ENCODE measurements at regions of chr3 and their contacts with region 1.

Region 1: GRCh38 chr3:121698901-121699300 is 38.2 kb upstream of the HCLS1 start:
- DNase-seq: no peak
- H3K4me3 ChIP-seq: no peak overlapping the region
- H3K27ac ChIP-seq: no peak overlapping the region
- H3K4me1 ChIP-seq: no peaks in the 10 kb centered on the region
- CTCF ChIP-seq: no peak

Region 2: GRCh38 chr3:119751423-119751822 is 1947.5 kb before region 1 on chr3:
- CTCF ChIA-PET with region 1: no interaction called
- POLR2A ChIA-PET with region 1: no interaction called
- intact Hi-C with region 1: no loop called
- DNase-seq: no peak
- H3K4me3 ChIP-seq: no peak overlapping the region
- H3K27ac ChIP-seq: no peak overlapping the region
- H3K4me1 ChIP-seq: no peaks in the 10 kb centered on the region
- CTCF ChIP-seq: no peak

Region 3: GRCh38 chr3:121405631-121406030 is 293.3 kb before region 1 on chr3:
- CTCF ChIA-PET with region 1: no interaction called
- POLR2A ChIA-PET with region 1: no interaction called
- intact Hi-C with region 1: no loop called
- DNase-seq: no peak
- H3K4me3 ChIP-seq: no peak overlapping the region
- H3K27ac ChIP-seq: no peak overlapping the region
- H3K4me1 ChIP-seq: no peaks in the 10 kb centered on the region
- CTCF ChIP-seq: no peak

Region 4: GRCh38 chr3:121651684-121652083 is 47.2 kb before region 1 on chr3:
- CTCF ChIA-PET with region 1: no interaction called
- POLR2A ChIA-PET with region 1: no interaction called
- intact Hi-C with region 1: no loop called
- DNase-seq: no peak
- H3K4me3 ChIP-seq: no peak overlapping the region
- H3K27ac ChIP-seq: no peak overlapping the region
- H3K4me1 ChIP-seq: peaks cover 13% of the 10 kb centered on the region
- CTCF ChIP-seq: no peak

Region 5: GRCh38 chr3:121681792-121682191 is 17.1 kb before region 1 on chr3:
- CTCF ChIA-PET with region 1: no interaction called
- POLR2A ChIA-PET with region 1: interaction called, 10 read pairs
- intact Hi-C with region 1: no loop called
- DNase-seq: no peak
- H3K4me3 ChIP-seq: no peak overlapping the region
- H3K27ac ChIP-seq: no peak overlapping the region
- H3K4me1 ChIP-seq: no peaks in the 10 kb centered on the region
- CTCF ChIP-seq: no peak

Region 6: DNA sequence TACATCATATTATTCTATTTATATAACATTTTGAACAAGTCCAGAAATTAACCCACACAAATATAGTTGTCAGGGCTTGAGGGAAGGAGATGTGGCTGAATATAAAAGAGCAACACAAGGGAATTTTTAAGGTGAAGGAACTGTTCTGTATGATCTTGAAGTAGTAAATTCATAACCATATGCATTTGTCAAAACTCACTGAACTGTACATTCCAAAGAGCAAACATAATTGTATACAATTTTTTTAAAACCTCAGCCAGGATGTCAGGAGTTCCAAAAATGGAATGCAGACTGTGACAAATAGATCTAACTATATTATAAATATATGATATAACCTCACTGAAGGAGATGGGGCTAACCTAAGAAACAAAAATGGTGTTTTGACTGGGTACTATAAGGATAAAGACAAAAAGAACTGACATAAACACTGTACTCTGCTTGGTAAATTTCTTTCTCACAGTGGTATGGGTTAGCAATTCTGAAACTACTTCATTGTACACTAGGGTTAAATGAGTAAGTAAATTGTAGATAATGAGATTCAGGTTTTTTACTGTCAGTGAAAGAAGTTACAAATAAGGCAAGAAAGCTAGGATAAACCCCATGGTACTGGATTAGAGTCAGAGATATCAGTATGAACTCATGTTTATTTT is 36.3 kb after region 1 on chr3:
- CTCF ChIA-PET with region 1: no interaction called
- POLR2A ChIA-PET with region 1: interaction called, 10 read pairs
- intact Hi-C with region 1: no loop called
- DNase-seq: no peak
- H3K4me3 ChIP-seq: no peak overlapping the region
- H3K27ac ChIP-seq: no peak overlapping the region
- H3K4me1 ChIP-seq: no peaks in the 10 kb centered on the region
- CTCF ChIP-seq: no peak

Measured in OCI-LY7 (cell line).